Transverse colon (tissue), 4 donors: ENCODE measurements at regions of chr4 and their contacts with region 1.

Region 1: DNA sequence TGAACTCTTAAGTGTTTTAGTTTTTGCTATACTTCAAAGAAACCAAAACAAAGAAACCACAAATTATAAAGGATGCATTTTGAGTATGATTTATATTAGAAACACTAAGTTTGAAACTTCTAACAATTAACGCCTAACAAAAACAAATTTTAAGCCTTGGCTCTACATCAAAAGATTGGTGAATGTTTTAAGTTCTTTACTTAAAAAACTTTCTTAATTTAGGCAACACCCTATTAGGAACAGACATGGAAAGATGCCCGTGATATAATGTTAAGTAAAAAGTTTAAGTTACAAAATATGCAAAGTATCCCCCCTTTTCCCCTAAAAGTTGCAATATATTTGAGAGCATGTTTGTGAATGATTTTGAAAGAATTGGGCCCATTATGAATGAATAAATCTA is 21.2 kb downstream of the PROM1 start:
- DNase-seq: no peak
- H3K4me3 ChIP-seq: no peak overlapping the region
- H3K27ac ChIP-seq: no peak overlapping the region
- H3K4me1 ChIP-seq: peaks cover 0 to 8% (median 0%) of the 10 kb centered on the region in 4 donors
- H3K27me3 ChIP-seq: no peaks in the 10 kb centered on the region
- CTCF ChIP-seq: no peak
- EP300 ChIP-seq: no peak
- POLR2A ChIP-seq: no peak

Region 2: GRCh38 chr4:16942491-16942890 is 879.9 kb after region 1 on chr4:
- in situ Hi-C with region 1: no loop called
- intact Hi-C with region 1: loop called (anchors 5 kb)
- DNase-seq: no peak
- H3K4me3 ChIP-seq: no peak overlapping the region
- H3K27ac ChIP-seq: no peak overlapping the region
- H3K4me1 ChIP-seq: no peaks in the 10 kb centered on the region
- H3K27me3 ChIP-seq: no peaks in the 10 kb centered on the region
- CTCF ChIP-seq: no peak
- EP300 ChIP-seq: no peak
- POLR2A ChIP-seq: no peak